ENCODE measurements at regions of chr4 and their contacts with region 1.

Region 1: GRCh38 chr4:12633053-12633651 is 851.0 kb downstream of the RAB28 start:
- DNase-seq: peak; percentile 53
- H3K4me3 Mint-ChIP-seq: no peak overlapping the region
- H3K27ac Mint-ChIP-seq: no peak overlapping the region
- H3K4me1 Mint-ChIP-seq: no peaks in the 10 kb centered on the region
- H3K27me3 Mint-ChIP-seq: no peaks in the 10 kb centered on the region

Region 2: GRCh38 chr4:11765849-11766453 is 867.2 kb before region 1 on chr4:
- intact Hi-C with region 1: loop called (anchors 2 kb)
- DNase-seq: no peak
- H3K4me3 Mint-ChIP-seq: no peak overlapping the region
- H3K27ac Mint-ChIP-seq: no peak overlapping the region
- H3K4me1 Mint-ChIP-seq: no peaks in the 10 kb centered on the region
- H3K27me3 Mint-ChIP-seq: no peaks in the 10 kb centered on the region

Region 3: GRCh38 chr4:12678948-12679616 is 45.9 kb after region 1 on chr4:
- intact Hi-C with region 1: no loop called
- DNase-seq: no peak
- H3K4me3 Mint-ChIP-seq: no peak overlapping the region
- H3K27ac Mint-ChIP-seq: no peak overlapping the region
- H3K4me1 Mint-ChIP-seq: no peaks in the 10 kb centered on the region
- H3K27me3 Mint-ChIP-seq: no peaks in the 10 kb centered on the region